Activated CD4-positive, alpha-beta T cell treated with anti-CD3 and anti-CD28 coated beads, Interleukin-2, amount 10 ng/mL, durations not matched to agents 24 days and 14 days (primary cell): ENCODE measurements at regions of chr2 and their contacts with region 1.

Region 1: GRCh38 chr2:232697100-232697865 is at the start of gene GIGYF2:
- DNase-seq: peak; percentile 97
- H3K4me3 Mint-ChIP-seq: peak within 1 kb of the TSS; percentile 99
- H3K27ac Mint-ChIP-seq: peak within 1 kb of the TSS; percentile 92
- H3K4me1 Mint-ChIP-seq: peaks cover 28% of the 10 kb centered on the region
- H3K27me3 Mint-ChIP-seq: peaks cover 6% of the 10 kb centered on the region
- total RNA-seq, gene GIGYF2: 71.9 and 72.0 TPM in 2 replicates

Region 2: GRCh38 chr2:232550354-232551249 is 146.7 kb before region 1 on chr2 and contains the starts of genes EIF4E2 and TIGD1:
- intact Hi-C with region 1: loop called (anchors 2 kb)
- DNase-seq: peak; percentile 97
- H3K4me3 Mint-ChIP-seq: peak within 1 kb of the TSS; percentile 96
- H3K27ac Mint-ChIP-seq: peak within 1 kb of the TSS; percentile 100
- H3K4me1 Mint-ChIP-seq: peaks cover 61% of the 10 kb centered on the region
- H3K27me3 Mint-ChIP-seq: no peaks in the 10 kb centered on the region
- total RNA-seq, gene EIF4E2: 89.9 and 93.2 TPM in 2 replicates
- total RNA-seq, gene TIGD1: 8.5 and 9.4 TPM in 2 replicates

Region 3: DNA sequence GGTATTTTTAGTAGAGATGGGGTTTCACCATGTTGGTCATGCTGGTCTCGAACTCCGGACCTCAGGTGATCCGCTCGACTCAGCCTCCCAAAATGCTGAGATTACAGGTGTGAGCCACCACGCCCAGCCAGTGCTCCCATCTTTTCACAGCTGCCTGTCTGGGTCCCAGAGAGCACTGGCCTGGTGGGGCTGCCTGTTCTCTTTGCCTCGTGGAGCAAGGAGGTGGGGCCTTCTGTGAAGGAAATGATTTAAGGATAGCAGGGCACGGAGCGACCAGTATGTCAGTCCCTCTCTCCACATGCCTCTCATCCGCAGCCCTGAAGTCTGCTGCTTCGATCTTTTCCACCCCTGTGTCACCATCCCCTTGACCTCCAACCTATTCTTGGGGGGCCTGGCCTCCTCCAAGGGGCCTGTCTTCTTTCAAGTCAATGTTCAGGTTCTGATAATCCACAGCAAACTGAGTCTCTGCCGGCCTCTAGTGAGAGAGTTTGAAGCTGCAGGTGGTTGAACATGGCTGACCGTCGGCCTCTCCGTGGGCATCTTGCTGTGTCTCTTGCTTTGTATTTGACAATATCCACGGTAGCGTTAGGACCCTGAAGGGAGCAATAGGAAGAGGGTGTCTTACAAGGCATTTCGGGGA is 28.4 kb before region 1 on chr2:
- intact Hi-C with region 1: no loop called
- DNase-seq: no peak
- H3K4me3 Mint-ChIP-seq: no peak overlapping the region
- H3K27ac Mint-ChIP-seq: no peak overlapping the region
- H3K4me1 Mint-ChIP-seq: no peaks in the 10 kb centered on the region
- H3K27me3 Mint-ChIP-seq: peaks cover 4% of the 10 kb centered on the region

Region 4: DNA sequence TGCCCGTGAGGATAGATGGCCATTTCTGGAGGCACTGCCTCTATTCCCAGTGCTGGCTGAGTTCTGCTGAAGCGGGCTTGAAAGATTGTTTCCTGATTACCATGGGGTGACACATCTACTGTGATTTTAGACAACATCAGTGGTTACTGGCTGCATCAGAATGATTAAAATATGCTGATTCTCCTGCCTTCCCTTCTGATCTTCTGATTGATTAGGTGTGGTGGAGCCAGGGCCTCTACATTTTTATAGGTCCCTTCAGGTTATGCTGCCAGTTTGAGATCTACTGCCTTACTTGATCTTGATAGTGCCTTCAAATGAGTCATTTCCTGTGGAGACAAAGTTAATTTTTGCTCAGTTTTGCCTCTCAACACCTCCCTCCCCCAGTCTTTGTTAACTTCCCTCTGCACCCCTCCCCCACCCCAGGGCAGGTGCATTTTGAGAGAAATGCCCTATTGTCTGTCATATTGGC is 141.2 kb after region 1 on chr2:
- intact Hi-C with region 1: loop called (anchors 5 kb)
- DNase-seq: peak; percentile 84
- H3K4me3 Mint-ChIP-seq: peak overlapping the region; percentile 40
- H3K27ac Mint-ChIP-seq: peak overlapping the region; percentile 51
- H3K4me1 Mint-ChIP-seq: peaks cover 28% of the 10 kb centered on the region
- H3K27me3 Mint-ChIP-seq: no peaks in the 10 kb centered on the region